ENCODE measurements at regions of chr13 and their contacts with region 1.

Region 1: GRCh38 chr13:50991579-50992521 is 82.3 kb downstream of the RNASEH2B start:
- DNase-seq: no peak
- H3K4me3 ChIP-seq: no peak overlapping the region
- H3K27ac ChIP-seq: no peak overlapping the region
- H3K4me1 ChIP-seq: peaks cover 0 to 12% (median 8%) of the 10 kb centered on the region in 4 experiments
- H3K27me3 ChIP-seq: peaks cover 0 to 7% (median 5%) of the 10 kb centered on the region in 4 experiments; a peak in 3 of 7 replicates
- CTCF ChIP-seq: no peak
- EP300 ChIP-seq: no peak
- POLR2A ChIP-seq: no peak
- RAD21 ChIP-seq: no peak

Region 2: GRCh38 chr13:50951366-50951765 is 40.5 kb before region 1 on chr13:
- CTCF ChIA-PET with region 1: no interaction called
- POLR2A ChIA-PET with region 1: no interaction called
- DNase-seq: no peak
- H3K4me3 ChIP-seq: no peak overlapping the region
- H3K27ac ChIP-seq: no peak overlapping the region
- H3K4me1 ChIP-seq: peaks cover 0 to 3% (median 0%) of the 10 kb centered on the region in 4 experiments; a peak in 2 of 7 replicates
- H3K27me3 ChIP-seq: no peaks in the 10 kb centered on the region
- CTCF ChIP-seq: no peak
- EP300 ChIP-seq: no peak
- POLR2A ChIP-seq: no peak
- RAD21 ChIP-seq: no peak

Region 3: DNA sequence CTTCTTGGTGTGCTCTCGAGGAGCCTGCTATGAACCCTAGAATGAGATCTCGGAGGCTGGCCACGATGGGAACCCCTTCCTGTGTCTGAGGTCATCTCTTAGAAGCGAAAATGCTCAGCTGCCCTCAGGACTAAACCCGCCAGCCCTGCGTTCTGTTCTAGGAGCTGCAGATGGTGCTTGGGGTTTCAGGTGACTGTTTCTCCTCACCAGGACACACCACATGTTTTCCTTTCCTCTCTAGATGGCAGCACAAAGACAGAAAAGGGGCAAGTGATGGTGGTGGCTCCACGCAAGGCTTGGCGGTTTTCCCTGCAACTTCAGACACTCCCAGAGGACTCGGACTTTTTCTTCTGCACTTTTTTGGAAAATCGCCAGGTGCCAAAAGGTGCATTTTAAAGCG is 22.2 kb before region 1 on chr13:
- CTCF ChIA-PET with region 1: interaction called, 16 read pairs
- POLR2A ChIA-PET with region 1: interaction called, 5 read pairs
- DNase-seq: peak in 1 of 2 experiments; percentile 57
- H3K4me3 ChIP-seq: no peak overlapping the region
- H3K27ac ChIP-seq: no peak overlapping the region
- H3K4me1 ChIP-seq: no peaks in the 10 kb centered on the region
- H3K27me3 ChIP-seq: no peaks in the 10 kb centered on the region
- CTCF ChIP-seq: peak; percentile 29 to 62 (median 60)
- EP300 ChIP-seq: no peak
- POLR2A ChIP-seq: no peak
- RAD21 ChIP-seq: peak; percentile 70 to 76

Region 4: DNA sequence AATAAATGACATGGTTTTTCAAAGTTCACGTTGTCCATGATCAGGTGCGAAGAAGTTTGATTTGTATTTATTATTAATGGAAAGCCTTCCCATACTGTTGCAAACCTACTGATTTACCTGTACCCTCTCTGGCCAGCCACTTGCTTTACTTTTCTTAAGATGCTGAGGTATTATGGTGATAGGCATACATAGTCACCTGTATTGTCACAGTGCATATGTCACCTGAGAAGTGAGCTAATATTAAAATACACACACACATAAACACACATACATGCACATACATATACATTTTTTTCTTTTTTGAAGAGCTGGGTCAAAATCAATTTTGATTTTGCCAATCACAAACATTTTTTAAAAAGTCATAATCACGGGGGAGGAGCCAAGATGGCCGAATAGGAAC is 10.2 kb before region 1 on chr13:
- CTCF ChIA-PET with region 1: interaction called, 3 read pairs
- POLR2A ChIA-PET with region 1: interaction called, 12 read pairs
- DNase-seq: no peak
- H3K4me3 ChIP-seq: peak overlapping the region in 1 of 4 experiments; percentile 53; a peak in 3 of 8 replicates
- H3K27ac ChIP-seq: no peak overlapping the region
- H3K4me1 ChIP-seq: no peaks in the 10 kb centered on the region; a peak in 1 of 7 replicates
- H3K27me3 ChIP-seq: no peaks in the 10 kb centered on the region
- CTCF ChIP-seq: no peak
- EP300 ChIP-seq: no peak
- POLR2A ChIP-seq: no peak
- RAD21 ChIP-seq: no peak

Region 5: DNA sequence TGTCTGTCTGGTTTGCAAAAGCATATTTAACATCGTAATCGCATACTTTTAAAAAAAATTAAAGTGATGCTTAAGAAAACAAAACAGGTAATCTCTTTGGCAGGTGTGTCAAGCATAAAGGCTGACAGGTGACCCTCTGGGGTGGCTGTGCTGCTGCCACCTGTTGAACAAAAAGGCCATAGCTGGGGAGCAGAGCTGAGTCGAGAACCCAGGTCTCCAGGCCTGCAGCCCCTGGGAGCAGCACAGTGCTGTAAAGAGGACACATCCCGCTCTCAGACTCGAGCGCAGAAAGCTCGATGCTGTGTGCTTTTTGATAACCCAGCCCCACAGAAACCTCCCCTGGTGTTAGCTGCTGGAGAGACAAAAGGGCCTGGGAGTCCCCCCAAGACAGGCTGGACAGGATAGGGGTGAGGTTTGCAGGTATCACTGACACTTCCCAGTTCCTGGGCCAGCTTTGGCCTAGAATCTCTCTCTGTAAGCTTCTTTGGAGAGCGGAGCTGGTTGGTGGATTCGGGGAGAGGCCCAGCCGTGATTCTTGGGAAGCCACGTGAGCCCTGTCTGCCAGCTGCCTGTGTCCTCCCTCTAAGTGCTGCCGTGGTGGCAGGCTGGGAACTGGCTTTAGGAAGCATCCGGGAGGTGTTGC is 52.3 kb after region 1 on chr13:
- CTCF ChIA-PET with region 1: interaction called, 19 read pairs
- POLR2A ChIA-PET with region 1: no interaction called
- DNase-seq: peak in 1 of 2 experiments; percentile 46
- H3K4me3 ChIP-seq: no peak overlapping the region
- H3K27ac ChIP-seq: no peak overlapping the region
- H3K4me1 ChIP-seq: no peaks in the 10 kb centered on the region
- H3K27me3 ChIP-seq: no peaks in the 10 kb centered on the region
- CTCF ChIP-seq: peak; percentile 31 to 49 (median 39); a peak in 2 of 4 replicates
- EP300 ChIP-seq: no peak
- POLR2A ChIP-seq: no peak
- RAD21 ChIP-seq: peak; percentile 25 to 49; a peak in 2 of 4 replicates

Region 6: GRCh38 chr13:51101636-51102235 is 109.9 kb after region 1 on chr13:
- CTCF ChIA-PET with region 1: no interaction called
- POLR2A ChIA-PET with region 1: no interaction called
- DNase-seq: peak in 1 of 2 experiments; percentile 36
- H3K4me3 ChIP-seq: no peak overlapping the region
- H3K27ac ChIP-seq: no peak overlapping the region
- H3K4me1 ChIP-seq: peaks cover 0 to 15% (median 4%) of the 10 kb centered on the region in 4 experiments; a peak in 3 of 7 replicates
- H3K27me3 ChIP-seq: no peaks in the 10 kb centered on the region
- CTCF ChIP-seq: no peak
- EP300 ChIP-seq: no peak
- POLR2A ChIP-seq: no peak
- RAD21 ChIP-seq: no peak

Measured in H1 (cell line).